ENCODE measurements at regions of chr9 and their contacts with region 1.

Region 1: GRCh38 chr9:22452415-22453010 is 5.9 kb downstream of the DMRTA1 start:
- DNase-seq: peak; percentile 63
- H3K4me3 ChIP-seq: no peak overlapping the region
- H3K27ac ChIP-seq: no peak overlapping the region
- H3K4me1 ChIP-seq: peaks cover 13% of the 10 kb centered on the region
- H3K27me3 ChIP-seq: no peaks in the 10 kb centered on the region
- CTCF ChIP-seq: peak; percentile 61 to 68
- POLR2A ChIP-seq: no peak

Region 2: GRCh38 chr9:22244141-22245011 is 208.1 kb before region 1 on chr9:
- CTCF ChIA-PET with region 1: interaction called, 72 read pairs
- POLR2A ChIA-PET with region 1: no interaction called
- dilution Hi-C with region 1: no loop called
- intact Hi-C with region 1: loop called (anchors 1 kb)
- DNase-seq: peak; percentile 47
- H3K4me3 ChIP-seq: no peak overlapping the region
- H3K27ac ChIP-seq: no peak overlapping the region
- H3K4me1 ChIP-seq: peaks cover 6% of the 10 kb centered on the region
- H3K27me3 ChIP-seq: peaks cover 4 to 7% of the 10 kb centered on the region in 2 experiments
- CTCF ChIP-seq: peak; percentile 28 to 58
- POLR2A ChIP-seq: no peak

Region 3: GRCh38 chr9:22316645-22317044 is 135.9 kb before region 1 on chr9:
- CTCF ChIA-PET with region 1: interaction called, 617 read pairs
- POLR2A ChIA-PET with region 1: no interaction called
- dilution Hi-C with region 1: no loop called
- intact Hi-C with region 1: no loop called
- DNase-seq: no peak
- H3K4me3 ChIP-seq: no peak overlapping the region
- H3K27ac ChIP-seq: no peak overlapping the region
- H3K4me1 ChIP-seq: no peaks in the 10 kb centered on the region
- H3K27me3 ChIP-seq: no peaks in the 10 kb centered on the region
- CTCF ChIP-seq: no peak
- POLR2A ChIP-seq: no peak

Region 4: DNA sequence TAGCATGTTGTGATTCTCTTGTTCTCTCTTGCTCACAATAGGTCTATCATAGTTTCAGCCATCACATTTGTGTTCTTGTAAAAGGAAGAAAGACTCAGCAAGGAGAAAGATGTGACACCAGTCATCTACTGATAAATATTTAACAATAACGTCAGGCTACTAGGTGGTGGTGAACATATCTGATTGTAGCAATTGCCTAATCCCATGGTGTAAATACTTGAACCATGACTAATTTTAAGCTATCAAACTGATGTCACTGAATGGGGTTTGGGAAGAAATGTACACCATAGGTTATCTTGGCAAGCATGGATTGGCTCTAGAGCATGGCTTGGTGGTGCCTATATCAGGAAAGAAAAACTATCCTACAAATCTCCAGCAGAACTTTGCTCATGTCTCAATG is 10.7 kb after region 1 on chr9:
- CTCF ChIA-PET with region 1: interaction called, 25 read pairs
- POLR2A ChIA-PET with region 1: no interaction called
- dilution Hi-C with region 1: no loop called
- intact Hi-C with region 1: no loop called
- DNase-seq: no peak
- H3K4me3 ChIP-seq: no peak overlapping the region
- H3K27ac ChIP-seq: no peak overlapping the region
- H3K4me1 ChIP-seq: no peaks in the 10 kb centered on the region
- H3K27me3 ChIP-seq: peaks cover 0 to 9% of the 10 kb centered on the region in 2 experiments
- CTCF ChIP-seq: no peak
- POLR2A ChIP-seq: no peak

Region 5: DNA sequence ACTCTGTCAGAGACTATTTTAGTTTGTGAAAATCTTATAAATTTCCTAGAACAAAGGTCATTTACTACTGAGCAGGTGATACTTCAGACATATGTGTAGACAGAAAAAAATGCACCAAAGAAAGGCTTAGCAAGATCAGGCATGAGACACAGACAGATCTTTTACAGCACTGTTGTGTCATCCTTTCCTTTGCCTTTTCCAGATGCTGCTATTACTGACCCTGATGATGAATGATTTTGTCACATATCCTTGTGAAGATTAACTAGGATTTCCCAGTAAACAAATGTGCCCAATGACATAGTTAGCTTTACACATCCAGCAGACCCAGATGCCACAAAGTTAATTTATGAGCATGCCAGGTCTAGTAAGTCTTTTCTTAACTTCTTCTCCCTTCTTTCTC is 62.4 kb after region 1 on chr9:
- CTCF ChIA-PET with region 1: no interaction called
- POLR2A ChIA-PET with region 1: no interaction called
- dilution Hi-C with region 1: no loop called
- intact Hi-C with region 1: no loop called
- DNase-seq: no peak
- H3K4me3 ChIP-seq: no peak overlapping the region
- H3K27ac ChIP-seq: no peak overlapping the region
- H3K4me1 ChIP-seq: no peaks in the 10 kb centered on the region
- H3K27me3 ChIP-seq: no peaks in the 10 kb centered on the region
- CTCF ChIP-seq: no peak
- POLR2A ChIP-seq: no peak

Region 6: GRCh38 chr9:22682961-22683699 is 230.6 kb after region 1 on chr9:
- CTCF ChIA-PET with region 1: no interaction called
- POLR2A ChIA-PET with region 1: no interaction called
- dilution Hi-C with region 1: no loop called
- intact Hi-C with region 1: no loop called
- DNase-seq: no peak
- H3K4me3 ChIP-seq: no peak overlapping the region
- H3K27ac ChIP-seq: no peak overlapping the region
- H3K4me1 ChIP-seq: no peaks in the 10 kb centered on the region
- H3K27me3 ChIP-seq: no peaks in the 10 kb centered on the region
- CTCF ChIP-seq: no peak
- POLR2A ChIP-seq: no peak

Measured in endothelial cell of umbilical vein (primary cell).